ENCODE measurements at regions of chr1 and their contacts with region 1.

Region 1: DNA sequence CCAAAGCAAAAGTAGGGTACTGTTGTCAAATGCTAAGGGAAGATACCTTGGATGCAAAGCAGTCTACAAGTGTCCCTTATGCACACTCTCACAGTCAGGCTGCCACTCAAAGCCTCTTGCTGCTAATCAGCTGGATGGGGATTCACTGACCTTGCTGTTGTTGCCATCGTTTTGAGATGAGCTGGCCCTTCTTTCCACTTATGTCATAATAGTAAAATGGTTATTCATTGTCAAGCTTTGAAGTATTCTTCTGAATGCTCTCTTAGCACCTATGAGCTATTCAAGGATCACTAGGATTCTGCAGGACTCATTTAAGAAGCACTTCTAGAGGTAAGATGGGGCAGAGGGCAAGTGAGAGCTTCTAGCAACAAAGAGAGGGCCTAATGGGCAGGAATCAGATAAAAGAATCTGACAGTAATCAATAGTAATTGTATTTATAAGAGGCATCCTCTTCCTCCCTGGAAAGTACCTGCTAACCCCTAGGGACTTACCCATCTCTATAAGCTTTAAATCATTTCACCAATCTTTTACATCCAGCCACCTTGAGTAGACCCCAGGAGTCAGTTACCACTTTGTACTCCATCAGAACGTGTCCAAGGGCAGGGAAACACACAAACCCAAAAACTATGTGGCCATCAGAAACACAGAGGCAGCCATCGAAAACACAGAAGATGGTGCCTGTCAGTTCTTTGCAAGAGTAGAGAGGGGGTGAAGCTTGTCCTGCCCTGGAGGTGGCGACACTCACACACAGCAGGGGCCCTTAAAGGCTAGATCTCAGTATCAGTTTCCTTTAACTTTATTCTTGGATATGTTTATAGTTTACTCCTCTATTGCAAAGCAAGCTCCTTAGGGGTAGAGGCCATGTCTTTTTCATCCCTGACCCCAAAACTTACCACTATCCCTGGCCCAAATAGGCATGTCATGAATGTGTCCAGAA is 103.7 kb upstream of the NFIA start:
- DNase-seq: no peak
- ATAC-seq: peak; percentile 57

Region 2: DNA sequence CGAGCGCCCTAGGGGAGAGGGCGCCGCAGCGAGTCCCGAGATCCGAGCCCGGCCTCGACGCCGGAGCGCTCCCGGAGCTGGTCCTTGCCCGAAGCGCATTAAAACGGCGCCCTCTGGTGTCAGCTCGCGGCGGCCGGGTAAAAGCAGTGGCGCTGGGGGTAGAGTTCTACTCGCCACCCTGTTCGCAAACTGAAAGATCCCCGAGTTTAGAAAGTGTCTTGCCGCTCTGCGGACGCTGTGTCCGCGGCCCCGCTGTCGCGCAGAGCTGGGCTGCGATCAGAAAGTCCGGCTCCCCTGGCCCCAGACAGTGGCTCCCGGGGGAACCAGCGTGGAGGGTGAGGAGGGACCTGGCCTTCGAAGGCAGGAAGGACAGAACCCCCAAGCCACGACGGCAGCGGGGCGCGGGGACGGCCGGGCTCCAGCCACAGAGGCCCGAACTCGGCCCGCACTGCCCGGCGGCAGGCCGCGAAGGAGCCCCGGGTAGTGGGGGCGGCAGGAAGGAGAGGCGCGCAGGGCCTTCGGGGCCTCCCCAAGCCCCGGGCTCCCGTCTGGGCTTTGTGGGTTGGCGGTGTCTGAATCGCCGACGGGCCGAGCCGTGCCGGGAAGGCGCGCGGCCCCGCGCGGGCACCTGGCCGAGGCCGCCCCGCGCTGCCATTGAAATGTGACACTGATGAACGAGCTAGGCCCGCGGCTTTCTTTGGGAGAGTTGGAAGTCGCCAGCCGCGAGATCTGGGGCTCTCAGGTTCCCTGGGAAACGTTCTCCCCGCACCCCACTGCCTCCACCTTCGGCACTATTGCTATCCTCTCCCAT is 64.5 kb after region 1 on chr1:
- intact Hi-C with region 1: loop called (anchors 5 kb)
- DNase-seq: peak; percentile 95
- ATAC-seq: peak; percentile 98

Region 3: GRCh38 chr1:61362351-61362750 is 383.7 kb after region 1 on chr1:
- intact Hi-C with region 1: no loop called
- DNase-seq: no peak
- ATAC-seq: no peak

Region 4: DNA sequence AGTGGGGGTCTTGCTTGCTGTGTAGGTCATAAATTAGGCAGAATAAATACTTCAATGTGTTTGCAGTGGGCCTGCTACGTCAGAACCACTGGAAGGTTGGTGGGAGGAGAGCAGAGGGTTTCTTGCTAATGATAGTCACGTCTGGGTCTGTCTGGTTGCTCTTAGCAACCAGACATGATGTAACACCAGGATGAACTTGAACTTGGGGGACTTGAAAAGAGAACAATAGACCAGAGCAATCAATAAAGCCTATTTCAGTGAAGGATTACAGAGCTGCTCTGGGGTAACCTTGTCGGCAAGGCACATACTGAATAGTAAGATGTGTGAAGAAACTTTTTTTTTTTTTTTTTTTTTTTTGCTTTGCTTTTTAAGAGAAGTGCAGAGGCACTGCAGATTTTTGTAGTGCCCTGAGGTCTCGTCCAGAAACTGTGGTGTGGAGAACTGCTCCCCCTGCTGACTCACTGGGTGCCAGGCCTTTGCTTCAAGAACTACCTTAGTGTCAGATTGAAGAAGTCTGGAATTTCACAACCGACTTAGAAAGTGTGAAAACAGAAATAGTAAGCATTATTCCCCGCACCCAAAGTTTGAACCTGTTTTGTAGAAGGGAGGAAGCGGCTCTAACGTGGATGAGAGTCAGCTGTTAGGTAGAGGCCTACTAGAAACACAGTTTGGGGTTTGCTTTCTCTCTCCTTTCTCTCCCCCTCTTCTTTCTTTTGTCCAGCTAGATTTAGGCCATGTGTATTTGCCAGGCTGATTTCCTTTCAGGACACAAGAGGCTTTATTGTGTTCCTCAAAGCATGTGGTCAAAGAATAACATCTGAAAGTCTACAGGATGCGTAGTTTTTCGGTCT is 474.6 kb after region 1 on chr1:
- intact Hi-C with region 1: loop called (anchors 10 kb)
- DNase-seq: peak; percentile 91
- ATAC-seq: peak; percentile 81

Region 5: DNA sequence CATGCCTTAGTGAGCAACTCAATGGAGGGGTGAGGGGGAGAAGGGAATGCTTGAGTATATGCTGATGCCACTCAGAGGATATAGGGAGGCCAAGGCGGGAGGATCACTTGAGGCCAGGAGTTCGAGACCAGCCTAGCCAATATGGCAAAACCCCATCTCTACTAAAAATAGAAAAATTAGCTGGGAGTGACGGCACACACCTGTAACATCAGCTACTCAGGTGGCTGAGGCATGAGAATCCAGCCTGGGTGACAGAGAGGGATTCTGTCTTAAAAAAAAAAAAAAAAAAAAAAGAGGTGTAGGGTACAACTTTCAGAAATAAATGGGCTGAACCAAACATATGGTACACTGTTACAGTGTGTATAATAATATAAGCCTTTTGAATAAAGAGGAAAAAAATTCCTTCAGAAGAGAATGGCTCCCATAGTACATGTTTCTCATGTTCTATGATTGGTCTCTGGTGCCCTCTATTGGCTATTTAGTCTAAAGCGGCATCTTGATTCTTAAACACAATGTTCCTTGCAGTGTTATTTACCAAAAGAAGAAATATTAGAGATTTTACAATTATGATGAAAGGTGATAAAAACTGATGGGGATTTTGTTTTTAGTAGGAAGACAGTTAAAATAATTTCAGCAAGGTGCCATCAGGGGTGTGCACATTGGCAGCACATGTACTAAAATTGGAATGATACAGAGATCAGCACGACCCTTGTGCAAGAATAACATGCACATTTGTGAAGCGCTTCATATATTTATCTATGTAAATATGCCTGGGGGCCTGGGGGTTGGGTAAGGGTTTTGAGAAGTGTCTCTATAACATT is 873.4 kb after region 1 on chr1:
- intact Hi-C with region 1: loop called (anchors 10 kb)
- DNase-seq: no peak
- ATAC-seq: peak; percentile 87